HCT116 (cell line): ENCODE measurements at regions of chr17 and their contacts with region 1.

Region 1: DNA sequence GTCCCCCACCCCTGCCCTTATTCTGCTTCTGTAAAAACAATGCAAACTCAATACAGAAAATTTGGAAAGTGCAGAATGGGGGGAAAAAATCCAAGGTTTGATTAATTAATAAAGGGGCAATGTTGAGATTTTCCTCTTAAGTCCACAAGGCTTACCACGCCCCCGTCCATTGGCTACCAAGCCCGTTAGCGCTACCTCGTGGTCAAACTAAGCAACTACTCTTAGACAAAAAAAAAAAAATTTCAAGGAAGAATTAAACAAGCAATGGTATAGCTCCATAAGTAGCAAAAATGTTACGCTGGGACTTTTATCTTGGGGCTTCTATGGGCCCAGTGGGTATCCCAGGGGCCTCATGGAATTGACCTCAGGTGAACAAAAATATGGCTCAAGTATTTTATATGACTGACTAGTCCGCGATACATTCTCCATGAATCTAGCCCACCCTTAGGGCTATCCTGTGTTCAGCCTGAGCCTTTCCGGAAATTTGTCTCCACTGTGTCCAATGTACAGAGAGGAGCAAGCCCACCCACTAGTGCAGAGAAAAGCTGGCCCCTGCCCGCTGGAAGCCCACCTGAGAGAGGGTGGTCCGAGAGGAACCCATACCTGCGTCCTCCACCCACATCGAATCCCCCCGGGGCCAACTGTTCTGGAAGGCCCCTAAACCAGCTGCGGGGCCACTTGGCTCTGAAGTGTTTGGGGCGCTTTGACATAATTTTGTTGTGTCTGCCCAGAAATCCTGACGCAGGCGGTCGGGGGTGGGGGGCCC is 19.1 kb upstream of the TEX2 start:
- DNase-seq: peak; percentile 86
- ATAC-seq: peak; percentile 89
- H3K4me3 ChIP-seq: no peak overlapping the region
- H3K27ac ChIP-seq: no peak overlapping the region
- H3K4me1 ChIP-seq: peaks cover 0 to 10% of the 10 kb centered on the region in 2 experiments; a peak in 2 of 4 replicates
- H3K27me3 ChIP-seq: no peaks in the 10 kb centered on the region
- CTCF ChIP-seq: peak; percentile 87 to 94 (median 91)
- POLR2A ChIP-seq: no peak
- RAD21 ChIP-seq: peak; percentile 94

Region 2: DNA sequence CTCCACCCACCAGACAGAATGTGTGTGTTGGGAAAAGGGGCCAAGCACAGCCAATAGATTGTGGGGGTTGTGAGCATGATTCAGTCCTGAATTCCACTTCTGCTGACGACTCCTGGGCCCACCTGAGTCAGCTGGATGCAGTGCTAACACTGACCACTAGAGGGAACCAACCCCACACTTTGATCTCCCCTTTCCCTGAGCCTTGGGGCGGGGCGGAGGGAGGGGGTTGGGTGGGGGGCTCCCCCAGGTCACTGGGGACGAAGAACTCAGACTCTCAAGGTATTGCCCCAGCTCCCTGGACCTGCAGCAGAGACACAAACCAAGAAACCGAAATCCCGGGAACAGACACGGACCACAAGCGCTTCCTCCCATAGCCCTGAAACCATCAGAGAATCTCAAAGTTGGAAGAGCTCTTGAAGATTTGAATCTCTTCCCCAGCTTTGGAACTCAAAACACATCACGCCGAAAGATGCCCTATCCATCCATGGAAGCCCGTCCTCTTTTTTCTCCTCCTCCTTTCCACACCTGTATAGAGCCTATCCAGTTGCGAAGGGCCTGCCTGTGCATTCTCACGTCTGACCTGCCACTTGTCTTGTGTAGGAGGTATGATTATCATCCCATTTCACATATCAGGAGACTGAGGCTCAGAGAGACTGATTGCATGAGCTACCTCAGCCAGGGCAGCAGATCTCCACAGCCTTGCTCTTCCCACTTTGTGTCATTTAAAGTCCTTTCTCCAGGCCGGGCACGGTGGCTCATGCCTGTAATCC is 370.3 kb before region 1 on chr17:
- CTCF ChIA-PET with region 1: no interaction called
- POLR2A ChIA-PET with region 1: no interaction called
- RAD21 ChIA-PET with region 1: no interaction called
- intact Hi-C with region 1: loop called (anchors 5 kb)
- DNase-seq: peak; percentile 16
- ATAC-seq: peak; percentile 86
- H3K4me3 ChIP-seq: no peak overlapping the region
- H3K27ac ChIP-seq: no peak overlapping the region
- H3K4me1 ChIP-seq: no peaks in the 10 kb centered on the region
- H3K27me3 ChIP-seq: no peaks in the 10 kb centered on the region; the same call in 1 of the 2 replicates
- CTCF ChIP-seq: peak; percentile 57 to 78 (median 59); a peak in 4 of 6 replicates
- POLR2A ChIP-seq: no peak
- RAD21 ChIP-seq: peak; percentile 62

Region 3: DNA sequence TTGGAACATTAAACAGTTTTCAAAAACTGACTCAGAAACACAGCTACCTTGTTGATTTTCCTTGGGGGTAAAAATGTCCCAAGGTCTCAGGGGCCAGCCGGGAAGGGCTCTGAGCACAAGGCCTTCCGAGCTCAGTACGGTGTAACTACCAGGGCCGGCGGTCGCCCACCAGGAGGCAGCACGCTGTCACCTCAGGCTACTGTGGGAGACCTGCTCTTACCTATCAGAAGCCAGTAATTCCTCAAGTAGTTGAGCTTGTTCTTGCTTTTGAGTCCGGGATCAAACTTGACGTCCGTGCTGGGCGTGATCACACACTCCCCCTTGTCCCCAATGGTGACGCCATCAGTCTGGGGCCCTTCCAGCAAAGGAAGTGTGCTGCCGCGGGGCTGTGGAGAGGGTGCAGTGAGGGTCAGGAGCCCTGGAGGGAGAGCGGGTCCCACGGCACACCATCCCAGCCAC is 218.3 kb before region 1 on chr17:
- CTCF ChIA-PET with region 1: interaction called, 4 read pairs
- POLR2A ChIA-PET with region 1: no interaction called
- RAD21 ChIA-PET with region 1: no interaction called
- intact Hi-C with region 1: loop called (anchors 10 kb)
- DNase-seq: no peak
- ATAC-seq: peak; percentile 97
- H3K4me3 ChIP-seq: no peak overlapping the region
- H3K27ac ChIP-seq: no peak overlapping the region
- H3K4me1 ChIP-seq: no peaks in the 10 kb centered on the region
- H3K27me3 ChIP-seq: no peaks in the 10 kb centered on the region
- CTCF ChIP-seq: peak; percentile 45 to 81 (median 72)
- POLR2A ChIP-seq: no peak
- RAD21 ChIP-seq: peak; percentile 91

Region 4: GRCh38 chr17:64200080-64201032 is 81.8 kb before region 1 on chr17:
- CTCF ChIA-PET with region 1: no interaction called
- POLR2A ChIA-PET with region 1: no interaction called
- RAD21 ChIA-PET with region 1: no interaction called
- intact Hi-C with region 1: no loop called
- DNase-seq: no peak
- ATAC-seq: no peak
- H3K4me3 ChIP-seq: no peak overlapping the region
- H3K27ac ChIP-seq: no peak overlapping the region
- H3K4me1 ChIP-seq: peaks cover 12 to 21% of the 10 kb centered on the region in 2 experiments
- H3K27me3 ChIP-seq: no peaks in the 10 kb centered on the region
- CTCF ChIP-seq: no peak
- POLR2A ChIP-seq: no peak
- RAD21 ChIP-seq: no peak